ENCODE measurements at regions of chr5 and their contacts with region 1.

Region 1: GRCh38 chr5:181223058-181223728 is at the start of gene TRIM41:
- DNase-seq: peak; percentile 97
- ATAC-seq: peak; percentile 70
- H3K4me3 ChIP-seq: peak within 1 kb of the TSS; percentile 80
- H3K27ac ChIP-seq: peak within 1 kb of the TSS; percentile 80
- H3K4me1 ChIP-seq: peaks cover 29% of the 10 kb centered on the region
- H3K27me3 ChIP-seq: no peaks in the 10 kb centered on the region
- CTCF ChIP-seq: no peak
- total RNA-seq, gene TRIM41: 18.7 and 26.8 TPM in 2 replicates

Region 2: GRCh38 chr5:180618819-180619562 is 604.2 kb before region 1 on chr5:
- CTCF ChIA-PET with region 1: no interaction called
- POLR2A ChIA-PET with region 1: no interaction called
- intact Hi-C with region 1: no loop called
- DNase-seq: no peak
- ATAC-seq: peak; percentile 40; the same call in 1 of the 2 replicates
- H3K4me3 ChIP-seq: no peak overlapping the region
- H3K27ac ChIP-seq: no peak overlapping the region
- H3K4me1 ChIP-seq: no peaks in the 10 kb centered on the region
- H3K27me3 ChIP-seq: peaks cover 32% of the 10 kb centered on the region
- CTCF ChIP-seq: peak; percentile 52; the same call in 1 of the 2 replicates

Region 3: GRCh38 chr5:181173420-181174342 is 49.5 kb before region 1 on chr5:
- CTCF ChIA-PET with region 1: interaction called, 3 read pairs
- POLR2A ChIA-PET with region 1: interaction called, 31 read pairs
- intact Hi-C with region 1: no loop called
- DNase-seq: peak; percentile 80
- ATAC-seq: peak; percentile 61
- H3K4me3 ChIP-seq: peak overlapping the region; percentile 67
- H3K27ac ChIP-seq: peak overlapping the region; percentile 50
- H3K4me1 ChIP-seq: peaks cover 4% of the 10 kb centered on the region; the same call in 1 of the 2 replicates
- H3K27me3 ChIP-seq: no peaks in the 10 kb centered on the region
- CTCF ChIP-seq: 0 out of 2 replicates have a peak, but pooled peaks have one; percentile 31

Region 4: DNA sequence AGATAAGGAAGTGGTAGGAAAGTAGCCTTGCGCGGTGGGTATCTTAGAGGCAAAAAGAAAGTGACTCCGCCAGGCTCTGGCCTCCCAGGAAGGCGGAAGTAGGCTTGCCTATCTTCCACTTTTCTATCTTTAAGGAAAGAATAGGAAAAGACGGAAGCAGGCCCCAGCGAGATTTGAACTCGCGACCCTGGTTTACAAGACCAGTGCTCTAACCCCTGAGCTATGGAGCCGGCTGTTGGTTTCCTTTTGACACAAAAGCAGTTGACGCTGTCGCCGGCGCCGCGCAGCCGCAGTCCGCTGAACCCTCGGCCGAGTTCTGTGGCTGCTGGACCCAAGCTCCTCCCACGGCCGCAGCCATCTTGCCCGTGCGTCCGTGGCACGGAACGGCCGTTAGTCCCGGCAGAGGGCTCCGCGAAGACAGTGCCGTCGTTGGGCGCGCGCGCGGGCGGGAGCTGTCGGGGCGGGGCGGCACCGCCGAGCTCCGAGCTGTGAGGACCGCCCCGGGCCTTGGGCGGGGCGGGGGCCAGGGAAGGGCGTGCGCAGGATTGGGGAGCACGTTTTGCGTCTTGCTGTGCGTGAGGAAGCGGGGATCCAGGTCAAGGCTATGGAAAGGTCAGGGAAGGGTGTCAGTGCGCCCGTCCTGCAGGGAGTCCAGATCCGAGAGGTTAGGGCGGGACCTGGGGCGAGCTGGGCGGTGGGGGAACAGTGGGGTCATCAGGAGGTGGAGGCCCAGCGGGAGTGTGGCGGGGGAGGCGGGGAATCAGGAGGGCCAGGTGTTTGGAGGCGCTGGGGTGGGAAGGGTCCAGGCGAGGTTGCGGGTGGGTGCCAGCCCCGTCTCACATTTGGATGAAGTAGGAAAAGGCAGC is 31.4 kb before region 1 on chr5:
- CTCF ChIA-PET with region 1: interaction called, 4 read pairs
- POLR2A ChIA-PET with region 1: no interaction called
- intact Hi-C with region 1: loop called (anchors 1 kb)
- DNase-seq: peak; percentile 96
- ATAC-seq: peak; percentile 55
- H3K4me3 ChIP-seq: peak overlapping the region; percentile 89
- H3K27ac ChIP-seq: peak overlapping the region; percentile 64
- H3K4me1 ChIP-seq: peaks cover 13% of the 10 kb centered on the region
- H3K27me3 ChIP-seq: no peaks in the 10 kb centered on the region
- CTCF ChIP-seq: no peak

Region 5: GRCh38 chr5:181207214-181208107 is 15.7 kb before region 1 on chr5:
- CTCF ChIA-PET with region 1: no interaction called
- POLR2A ChIA-PET with region 1: no interaction called
- intact Hi-C with region 1: loop called (anchors 1 kb)
- DNase-seq: peak; percentile 96
- ATAC-seq: peak; percentile 51
- H3K4me3 ChIP-seq: peak overlapping the region; percentile 85
- H3K27ac ChIP-seq: peak overlapping the region; percentile 69
- H3K4me1 ChIP-seq: peaks cover 18% of the 10 kb centered on the region
- H3K27me3 ChIP-seq: no peaks in the 10 kb centered on the region
- CTCF ChIP-seq: no peak

Region 6: GRCh38 chr5:181243512-181244343 is 20.5 kb after region 1 on chr5 and contains the start of gene RACK1:
- CTCF ChIA-PET with region 1: no interaction called
- POLR2A ChIA-PET with region 1: interaction called, 3 read pairs
- intact Hi-C with region 1: loop called (anchors 1 kb)
- DNase-seq: peak; percentile 78
- ATAC-seq: peak; percentile 48
- H3K4me3 ChIP-seq: peak within 1 kb of the TSS; percentile 99
- H3K27ac ChIP-seq: peak within 1 kb of the TSS; percentile 86
- H3K4me1 ChIP-seq: peaks cover 30% of the 10 kb centered on the region
- H3K27me3 ChIP-seq: no peaks in the 10 kb centered on the region
- CTCF ChIP-seq: no peak
- total RNA-seq, gene RACK1: 2,587 and 3,047 TPM in 2 replicates

Region 7: DNA sequence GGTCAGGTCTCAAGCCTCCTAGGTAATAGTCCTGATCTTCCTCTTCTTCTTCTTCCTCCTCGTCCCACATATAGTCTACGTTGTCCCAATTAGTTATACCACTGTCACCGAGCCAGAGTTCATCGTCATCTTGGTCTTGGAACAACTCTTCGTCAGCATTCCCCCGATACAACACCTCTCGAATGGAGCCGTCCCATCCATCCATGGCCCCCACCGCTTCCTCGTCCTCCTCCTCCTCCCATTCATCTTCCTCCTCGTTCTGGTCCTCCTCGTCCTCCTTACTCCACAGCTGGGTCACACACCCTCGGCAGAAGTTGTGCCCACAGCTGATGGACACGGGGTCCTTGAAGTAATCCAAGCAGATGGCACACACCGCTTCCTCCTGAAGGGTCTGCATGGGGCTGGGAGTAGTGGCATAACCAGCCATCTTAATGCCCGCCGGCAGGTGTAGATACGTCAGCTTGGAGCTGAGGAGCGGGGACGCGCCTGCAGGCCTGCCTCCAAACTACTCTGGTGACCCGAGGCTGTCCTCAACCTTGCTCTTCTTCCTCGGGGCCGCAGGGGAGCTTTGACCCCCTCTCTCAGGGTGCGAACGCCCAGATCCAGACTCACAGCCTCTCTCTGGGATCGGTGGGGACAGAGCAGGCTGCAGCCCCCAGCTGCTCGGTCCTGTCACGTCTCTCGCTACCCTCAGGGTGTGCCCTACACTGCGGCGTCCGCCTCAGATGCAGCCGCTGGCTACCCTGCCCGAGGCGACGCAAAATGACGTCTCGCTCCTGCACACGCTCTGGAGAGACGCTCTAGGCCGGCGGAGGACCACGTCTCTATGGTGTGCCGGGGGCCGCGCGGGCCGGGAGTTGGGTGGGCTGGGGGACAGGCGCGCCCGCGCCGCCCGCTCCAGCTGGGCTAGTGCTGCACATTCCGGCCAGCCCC is 37.5 kb after region 1 on chr5 and contains the start of gene TRIM52:
- CTCF ChIA-PET with region 1: interaction called, 3 read pairs
- POLR2A ChIA-PET with region 1: interaction called, 14 read pairs
- intact Hi-C with region 1: loop called (anchors 1 kb)
- DNase-seq: peak; percentile 94
- ATAC-seq: peak; percentile 79
- H3K4me3 ChIP-seq: peak within 1 kb of the TSS; percentile 87
- H3K27ac ChIP-seq: peak within 1 kb of the TSS; percentile 84
- H3K4me1 ChIP-seq: peaks cover 4% of the 10 kb centered on the region; the same call in 1 of the 2 replicates
- H3K27me3 ChIP-seq: no peaks in the 10 kb centered on the region
- CTCF ChIP-seq: no peak
- total RNA-seq, gene TRIM52: 4.4 and 8.9 TPM in 2 replicates